ENCODE measurements at regions of chr17 and their contacts with region 1.

Region 1: DNA sequence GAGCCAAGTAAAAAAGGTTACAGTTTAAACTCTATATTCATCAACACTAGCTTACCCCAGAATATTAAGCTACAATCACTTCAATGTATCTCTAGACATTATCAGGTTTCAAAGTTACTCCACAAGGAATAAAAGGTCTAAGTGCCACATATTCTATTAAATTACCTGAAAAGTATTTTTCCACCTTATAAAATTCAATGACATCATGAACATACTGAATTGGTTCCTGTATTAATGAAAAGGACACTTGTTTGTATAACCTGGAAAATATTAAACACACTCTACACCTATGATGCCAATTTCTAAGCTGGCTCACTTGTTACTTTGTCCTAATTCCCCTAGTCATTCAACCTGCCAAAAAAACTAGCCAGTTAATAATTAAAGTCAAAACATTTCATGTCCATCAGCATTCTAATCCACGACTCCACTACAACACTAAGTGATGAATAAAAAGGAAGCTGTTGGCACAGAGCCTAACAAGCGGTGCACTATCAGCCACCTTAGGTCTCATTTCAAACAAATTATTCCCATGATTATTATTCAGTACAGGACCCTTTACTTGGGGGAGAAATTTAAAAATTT is 12.2 kb downstream of the MED13 start:
- DNase-seq: no peak
- H3K4me3 Mint-ChIP-seq: no peak overlapping the region
- H3K27ac Mint-ChIP-seq: no peak overlapping the region
- H3K4me1 Mint-ChIP-seq: peaks cover 17% of the 10 kb centered on the region
- H3K27me3 Mint-ChIP-seq: no peaks in the 10 kb centered on the region
- CTCF ChIP-seq: no peak

Region 2: GRCh38 chr17:61981323-61981722 is 71.5 kb before region 1 on chr17:
- CTCF ChIA-PET with region 1: no interaction called
- POLR2A ChIA-PET with region 1: no interaction called
- intact Hi-C with region 1: no loop called
- DNase-seq: no peak
- H3K4me3 Mint-ChIP-seq: no peak overlapping the region
- H3K27ac Mint-ChIP-seq: no peak overlapping the region
- H3K4me1 Mint-ChIP-seq: peaks cover 11% of the 10 kb centered on the region
- H3K27me3 Mint-ChIP-seq: no peaks in the 10 kb centered on the region
- CTCF ChIP-seq: no peak

Region 3: DNA sequence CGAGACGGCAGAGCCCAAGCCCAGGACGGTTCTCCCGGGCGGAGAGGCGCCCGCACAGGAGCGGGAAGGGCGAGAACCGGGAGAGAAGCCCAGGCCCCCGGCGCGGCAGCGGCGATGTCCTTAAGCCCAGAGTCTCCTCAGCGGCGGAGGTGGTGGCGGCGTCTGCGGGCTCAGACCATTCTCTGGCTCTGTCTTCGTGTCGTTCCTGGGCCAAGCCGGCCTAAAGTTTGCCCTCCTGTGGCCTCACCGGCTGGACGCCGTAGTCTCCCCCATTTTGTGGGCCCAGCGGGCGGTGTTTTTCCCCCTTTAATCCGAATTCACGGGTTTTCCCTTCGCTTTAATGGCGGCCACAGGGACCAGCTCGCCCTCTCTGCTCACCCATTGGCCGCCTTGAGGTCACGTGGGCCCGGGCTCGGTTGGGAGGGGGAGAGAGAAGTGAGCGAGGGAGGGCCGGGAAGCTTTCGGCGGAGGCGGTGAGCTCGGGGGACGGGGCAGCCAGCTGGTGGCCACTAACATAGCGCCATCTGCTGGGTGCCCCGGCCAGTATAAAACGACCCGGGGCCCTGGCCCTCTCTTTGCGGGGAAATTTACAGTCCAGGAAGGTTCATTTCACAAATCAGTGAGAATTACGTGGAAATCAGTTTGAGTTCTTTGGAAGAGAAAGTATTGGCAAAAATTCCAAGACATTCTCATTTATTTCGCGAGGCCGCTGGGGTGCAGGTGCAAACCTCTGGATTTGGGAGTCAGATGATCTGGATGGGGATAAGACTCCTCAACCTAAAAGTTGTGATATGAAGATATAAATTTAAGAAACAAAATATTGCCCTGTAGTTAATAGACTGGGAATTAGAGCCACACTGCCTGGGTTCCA is 13.0 kb after region 1 on chr17:
- CTCF ChIA-PET with region 1: interaction called, 5 read pairs
- POLR2A ChIA-PET with region 1: interaction called, 12 read pairs
- intact Hi-C with region 1: no loop called
- DNase-seq: peak; percentile 98
- H3K4me3 Mint-ChIP-seq: peak overlapping the region; percentile 90
- H3K27ac Mint-ChIP-seq: peak overlapping the region; percentile 95
- H3K4me1 Mint-ChIP-seq: peaks cover 24% of the 10 kb centered on the region
- H3K27me3 Mint-ChIP-seq: no peaks in the 10 kb centered on the region
- CTCF ChIP-seq: peak; percentile 77